ENCODE measurements at regions of chr5 and their contacts with region 1.

Region 1: DNA sequence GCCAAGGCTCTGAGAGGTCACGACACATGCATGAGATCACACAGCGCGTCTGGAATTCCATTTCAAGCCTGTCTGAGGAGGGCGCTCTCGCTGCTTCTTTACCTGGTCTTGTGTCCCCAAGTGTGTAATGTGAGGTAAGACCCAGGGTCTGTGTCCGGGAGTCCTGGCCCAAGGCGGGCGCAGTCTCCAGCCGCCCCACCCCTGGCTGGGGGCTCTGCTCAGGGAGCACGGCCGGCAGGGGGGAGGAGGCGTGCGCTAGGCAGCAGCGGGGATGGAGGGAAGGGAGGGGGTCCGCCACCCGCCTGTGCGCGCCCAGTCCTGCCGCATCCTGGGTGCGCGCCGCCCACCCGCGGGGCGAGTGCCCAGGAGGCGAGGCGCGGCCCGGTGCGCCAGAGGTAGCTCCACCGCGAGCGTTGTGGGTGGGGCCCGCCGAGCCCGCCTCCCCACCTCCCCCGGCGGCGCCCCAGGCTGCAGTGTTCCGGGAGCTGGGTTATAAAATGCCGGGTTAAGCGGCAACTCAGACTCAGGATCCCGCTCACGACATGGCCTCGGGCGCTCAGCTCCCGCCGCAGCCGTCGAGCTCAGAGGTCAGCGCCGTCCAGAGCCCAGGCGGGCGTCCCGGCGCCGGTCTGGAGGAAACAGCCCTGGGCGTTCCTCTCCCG is at the start of gene CCNI2:
- DNase-seq: peak; percentile 46 to 73 (median 68)
- ATAC-seq: peak; percentile 87
- H3K4me3 ChIP-seq: peak within 1 kb of the TSS; percentile 49
- H3K4me3 Mint-ChIP-seq: peak within 1 kb of the TSS; percentile 66 to 89 (median 80)
- H3K27ac ChIP-seq: peak within 1 kb of the TSS; percentile 56
- H3K27ac Mint-ChIP-seq: peak within 1 kb of the TSS; percentile 45 to 84 (median 73)
- H3K4me1 ChIP-seq: peaks cover 0 to 4% of the 10 kb centered on the region in 2 donors
- H3K4me1 Mint-ChIP-seq: peaks cover 0 to 41% (median 6%) of the 10 kb centered on the region in 7 donors
- H3K27me3 ChIP-seq: no peaks in the 10 kb centered on the region
- H3K27me3 Mint-ChIP-seq: peaks cover 0 to 19% (median 7%) of the 10 kb centered on the region in 5 donors
- total RNA-seq, gene CCNI2: 3.5 to 44.9 (median 8.4) TPM

Region 2: DNA sequence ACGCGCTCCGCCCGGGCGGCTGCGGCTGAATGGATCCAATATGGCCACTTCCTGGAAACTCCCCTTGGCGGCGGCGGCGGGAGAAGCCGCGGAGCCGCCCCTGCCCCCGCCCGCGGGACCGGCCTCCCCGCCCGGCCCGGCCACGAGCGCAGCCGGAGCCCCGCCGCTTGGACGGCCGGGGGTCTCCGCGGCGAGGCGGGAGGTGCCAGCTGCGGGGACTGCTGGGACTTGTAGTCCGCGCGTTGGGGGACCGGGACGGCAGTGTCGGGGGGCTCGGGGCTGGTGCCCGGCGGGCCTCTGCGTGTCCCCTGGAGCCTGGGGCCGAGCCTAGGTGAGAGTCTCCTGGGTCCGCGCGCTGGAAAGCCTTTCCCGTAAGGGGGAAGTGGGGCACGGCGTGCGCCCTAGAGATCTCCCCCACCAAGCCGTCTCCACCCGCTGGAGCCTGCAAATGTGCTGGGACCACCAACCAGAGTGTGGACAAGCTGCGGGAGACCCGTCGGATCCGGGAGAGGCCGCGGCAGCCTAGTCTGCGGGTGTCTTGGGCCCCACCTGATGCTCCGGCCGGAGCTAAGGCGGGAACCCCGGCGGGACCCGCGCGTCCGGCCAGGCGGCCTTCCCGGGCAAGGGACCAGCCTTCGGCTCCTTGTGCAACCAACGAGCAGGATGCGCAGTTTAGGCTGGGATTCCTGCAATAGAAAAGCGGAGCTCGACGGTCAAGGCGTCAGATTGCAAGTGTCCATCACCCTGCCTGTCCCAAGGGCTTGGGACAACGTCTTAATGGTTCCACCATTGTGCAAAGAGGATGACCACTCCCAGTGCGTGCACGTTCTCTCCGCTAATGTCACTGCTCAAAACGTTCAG is 30.4 kb after region 1 on chr5 and contains the start of gene SEPTIN8:
- CTCF ChIA-PET with region 1: no interaction called
- POLR2A ChIA-PET with region 1: interaction called, 5 read pairs
- intact Hi-C with region 1: loop called (anchors 1 to 2 kb)
- DNase-seq: peak in 7 of 9 donors; percentile 1 to 70 (median 26)
- ATAC-seq: peak; percentile 72
- H3K4me3 ChIP-seq: peak within 1 kb of the TSS; percentile 68
- H3K4me3 Mint-ChIP-seq: peak within 1 kb of the TSS; percentile 71 to 91 (median 84)
- H3K27ac ChIP-seq: no peak within 1 kb of the TSS
- H3K27ac Mint-ChIP-seq: peak within 1 kb of the TSS in 5 of 9 donors; percentile 20 to 85 (median 56)
- H3K4me1 ChIP-seq: peaks cover 7 to 15% of the 10 kb centered on the region in 2 donors
- H3K4me1 Mint-ChIP-seq: peaks cover 0 to 41% (median 26%) of the 10 kb centered on the region in 7 donors
- H3K27me3 ChIP-seq: peaks cover 0 to 8% of the 10 kb centered on the region in 2 donors
- H3K27me3 Mint-ChIP-seq: peaks cover 33 to 63% (median 45%) of the 10 kb centered on the region in 5 donors
- total RNA-seq, gene SEPTIN8: 2.7 to 42.1 (median 5.2) TPM

Region 3: DNA sequence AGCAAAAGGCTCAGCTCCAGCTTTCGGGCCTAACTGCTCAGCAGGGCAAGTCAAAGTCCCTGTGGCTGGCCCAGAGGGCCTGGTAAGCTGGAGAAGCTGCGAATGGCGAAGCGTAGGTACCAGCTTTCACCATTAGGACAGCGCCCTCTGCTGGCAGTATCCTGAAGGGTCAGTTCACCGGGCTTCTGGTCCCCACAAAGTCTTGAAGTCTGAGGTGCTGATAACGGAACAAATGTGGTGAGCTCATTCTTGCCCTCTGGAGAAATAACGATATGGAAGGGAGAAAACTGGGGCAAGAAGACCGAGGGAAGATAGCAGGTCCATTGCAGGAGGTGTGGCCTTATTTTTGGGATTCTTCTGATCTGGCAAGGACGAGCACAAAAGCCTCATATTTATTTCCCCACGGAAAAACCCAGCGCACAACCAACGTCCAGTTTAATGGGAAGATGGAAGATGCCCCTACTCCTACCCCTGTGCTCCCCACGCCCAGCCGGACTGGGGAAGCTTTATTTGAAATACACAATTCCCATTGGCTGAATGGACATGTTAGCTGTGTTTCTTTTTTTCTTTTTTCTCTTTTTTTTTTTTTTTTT is 73.2 kb after region 1 on chr5:
- CTCF ChIA-PET with region 1: no interaction called
- POLR2A ChIA-PET with region 1: interaction called, 3 read pairs
- intact Hi-C with region 1: loop called (anchors 1 kb)
- DNase-seq: peak; percentile 60 to 86 (median 75)
- ATAC-seq: peak; percentile 93
- H3K4me3 ChIP-seq: peak overlapping the region; percentile 34
- H3K4me3 Mint-ChIP-seq: peak overlapping the region; percentile 5 to 86 (median 72)
- H3K27ac ChIP-seq: no peak overlapping the region
- H3K27ac Mint-ChIP-seq: peak overlapping the region in 2 of 9 donors; percentile 16 to 33
- H3K4me1 ChIP-seq: peaks cover 0 to 6% of the 10 kb centered on the region in 2 donors
- H3K4me1 Mint-ChIP-seq: peaks cover 6 to 18% (median 10%) of the 10 kb centered on the region in 7 donors
- H3K27me3 ChIP-seq: peaks cover 3 to 14% of the 10 kb centered on the region in 2 donors
- H3K27me3 Mint-ChIP-seq: peaks cover 13 to 51% (median 23%) of the 10 kb centered on the region in 5 donors

Region 4: GRCh38 chr5:134004592-134005375 is 1257.7 kb after region 1 on chr5 and contains the start of gene VDAC1:
- CTCF ChIA-PET with region 1: no interaction called
- POLR2A ChIA-PET with region 1: no interaction called
- intact Hi-C with region 1: loop called in 1 of 2 experiments (anchors 5 kb)
- DNase-seq: peak; percentile 74 to 92 (median 89)
- ATAC-seq: peak; percentile 85
- H3K4me3 ChIP-seq: peak within 1 kb of the TSS; percentile 83
- H3K4me3 Mint-ChIP-seq: peak within 1 kb of the TSS; percentile 89 to 97 (median 92)
- H3K27ac ChIP-seq: peak within 1 kb of the TSS; percentile 98
- H3K27ac Mint-ChIP-seq: peak within 1 kb of the TSS; percentile 86 to 97 (median 96)
- H3K4me1 ChIP-seq: peaks cover 17 to 26% of the 10 kb centered on the region in 2 donors
- H3K4me1 Mint-ChIP-seq: peaks cover 25 to 47% (median 43%) of the 10 kb centered on the region in 7 donors
- H3K27me3 ChIP-seq: no peaks in the 10 kb centered on the region
- H3K27me3 Mint-ChIP-seq: no peaks in the 10 kb centered on the region
- total RNA-seq, gene VDAC1: 37.8 to 259 (median 43.7) TPM